Activated CD8-positive, alpha-beta T cell treated with anti-CD3 and anti-CD28 coated beads, Interleukin-2, amount 10 ng/mL, durations not matched to agents 7 days and 5 days (primary cell): ENCODE measurements at regions of chr13 and their contacts with region 1.

Region 1: DNA sequence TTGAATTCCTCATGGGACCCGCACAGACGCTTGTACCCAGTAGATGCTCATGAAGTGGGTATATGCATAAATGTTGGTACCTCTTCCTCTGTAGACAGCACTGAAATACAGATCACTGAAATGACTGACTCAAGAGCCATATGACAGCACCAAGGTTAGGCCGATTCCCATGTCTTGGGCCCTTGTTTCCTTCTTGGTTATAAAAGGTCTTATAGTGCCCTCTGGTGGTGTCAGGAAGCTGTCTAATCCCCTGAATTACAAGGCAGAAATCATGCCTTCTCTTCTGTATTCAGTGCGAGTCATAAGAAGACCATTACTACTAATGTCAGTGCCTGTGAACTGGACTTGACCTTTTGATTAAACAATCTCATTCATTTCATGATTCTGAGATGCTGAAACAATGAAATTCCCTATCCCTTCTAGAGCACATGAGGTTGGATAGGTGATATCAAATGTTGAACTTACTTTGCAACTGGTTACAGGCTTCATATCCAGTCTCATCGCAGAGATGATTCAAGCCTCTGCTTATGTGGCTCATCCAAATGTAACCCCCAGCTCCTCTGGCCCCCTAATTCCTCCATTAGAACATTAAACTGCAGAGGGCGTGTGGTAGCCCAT is 59.7 kb downstream of the SPATA13 start:
- DNase-seq: peak; percentile 79
- ATAC-seq: peak; percentile 75
- H3K4me3 Mint-ChIP-seq: no peak overlapping the region
- H3K27ac Mint-ChIP-seq: no peak overlapping the region
- H3K4me1 Mint-ChIP-seq: peaks cover 50% of the 10 kb centered on the region
- H3K27me3 Mint-ChIP-seq: no peaks in the 10 kb centered on the region

Region 2: GRCh38 chr13:24020375-24020830 is 199.8 kb before region 1 on chr13:
- CTCF ChIA-PET with region 1: interaction called, 82 read pairs
- POLR2A ChIA-PET with region 1: no interaction called
- DNase-seq: peak; percentile 62
- ATAC-seq: no peak
- H3K4me3 Mint-ChIP-seq: no peak overlapping the region
- H3K27ac Mint-ChIP-seq: no peak overlapping the region
- H3K4me1 Mint-ChIP-seq: peaks cover 10% of the 10 kb centered on the region
- H3K27me3 Mint-ChIP-seq: no peaks in the 10 kb centered on the region

Region 3: DNA sequence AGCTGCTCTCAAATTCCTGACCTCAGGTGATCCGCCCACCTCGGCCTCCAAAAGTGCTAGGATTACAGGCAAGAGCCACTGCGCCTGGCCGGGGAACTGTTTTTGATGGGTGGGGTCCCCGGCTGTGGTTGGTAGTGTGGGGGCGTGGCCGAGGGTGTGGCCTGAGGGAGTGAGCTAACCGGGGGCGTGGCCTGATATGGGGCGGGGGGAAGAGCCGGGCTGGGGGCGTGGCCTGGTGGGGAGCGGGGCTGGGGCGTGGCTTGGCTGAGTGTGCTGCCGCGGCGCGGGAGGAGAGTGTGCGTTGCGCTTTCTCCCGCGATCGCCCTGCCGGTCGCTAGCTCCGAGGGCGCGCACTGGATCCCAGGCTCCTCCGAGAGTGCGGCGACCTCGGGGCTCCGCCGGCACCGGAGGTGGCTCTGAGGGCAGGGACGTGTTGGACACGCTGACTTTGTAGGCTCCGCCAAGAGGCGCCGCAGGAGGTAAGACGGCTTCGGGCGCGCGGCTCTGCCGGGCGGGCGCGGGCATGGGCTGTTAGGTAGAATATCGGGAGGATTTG is 59.7 kb before region 1 on chr13 and contains the start of gene SPATA13:
- CTCF ChIA-PET with region 1: interaction called, 15 read pairs
- POLR2A ChIA-PET with region 1: no interaction called
- DNase-seq: peak; percentile 94
- ATAC-seq: peak; percentile 92
- H3K4me3 Mint-ChIP-seq: peak within 1 kb of the TSS; percentile 88
- H3K27ac Mint-ChIP-seq: peak within 1 kb of the TSS; percentile 82
- H3K4me1 Mint-ChIP-seq: peaks cover 40% of the 10 kb centered on the region
- H3K27me3 Mint-ChIP-seq: peaks cover 3% of the 10 kb centered on the region
- total RNA-seq, gene SPATA13: 57.4 to 63.2 TPM

Region 4: DNA sequence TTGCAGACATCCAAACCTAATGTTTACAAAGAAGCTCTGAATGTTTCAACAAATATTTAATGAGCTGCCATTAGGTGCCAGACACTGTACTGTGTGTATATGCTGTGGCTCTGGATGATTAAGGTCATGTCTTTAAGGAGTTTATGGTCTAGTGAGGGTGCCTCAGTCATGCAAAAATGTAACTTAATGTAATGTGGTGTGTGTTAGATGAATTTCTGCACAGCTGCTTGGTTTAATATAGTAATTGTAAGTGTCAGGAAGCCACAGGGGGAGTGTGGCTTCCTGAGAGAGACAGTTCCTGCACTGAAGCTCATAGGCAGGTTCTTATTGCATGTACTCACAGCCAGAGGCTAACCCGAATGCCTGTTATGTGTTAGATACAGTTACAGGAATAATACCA is 16.4 kb before region 1 on chr13:
- CTCF ChIA-PET with region 1: interaction called, 26 read pairs
- POLR2A ChIA-PET with region 1: interaction called, 3 read pairs
- DNase-seq: peak; percentile 54
- ATAC-seq: peak; percentile 99
- H3K4me3 Mint-ChIP-seq: peak overlapping the region; percentile 56
- H3K27ac Mint-ChIP-seq: peak overlapping the region; percentile 80
- H3K4me1 Mint-ChIP-seq: peaks cover 42% of the 10 kb centered on the region
- H3K27me3 Mint-ChIP-seq: no peaks in the 10 kb centered on the region

Region 5: GRCh38 chr13:24473686-24474085 is 253.5 kb after region 1 on chr13:
- CTCF ChIA-PET with region 1: no interaction called
- POLR2A ChIA-PET with region 1: no interaction called
- DNase-seq: no peak
- ATAC-seq: no peak
- H3K4me3 Mint-ChIP-seq: no peak overlapping the region
- H3K27ac Mint-ChIP-seq: no peak overlapping the region
- H3K4me1 Mint-ChIP-seq: no peaks in the 10 kb centered on the region
- H3K27me3 Mint-ChIP-seq: no peaks in the 10 kb centered on the region